ENCODE measurements at regions of chr11 and their contacts with region 1.

Region 1: GRCh38 chr11:96342961-96343711 is at the start of gene MAML2:
- DNase-seq: peak; percentile 82 to 94 (median 85)
- H3K4me3 ChIP-seq: peak within 1 kb of the TSS; percentile 99
- H3K4me3 Mint-ChIP-seq: peak within 1 kb of the TSS; percentile 90 to 99 (median 96)
- H3K27ac ChIP-seq: peak within 1 kb of the TSS; percentile 46
- H3K27ac Mint-ChIP-seq: peak within 1 kb of the TSS; percentile 87 to 94 (median 92)
- H3K4me1 ChIP-seq: peaks cover 37% of the 10 kb centered on the region
- H3K4me1 Mint-ChIP-seq: peaks cover 40 to 44% (median 40%) of the 10 kb centered on the region in 3 donors
- H3K27me3 ChIP-seq: no peaks in the 10 kb centered on the region
- H3K27me3 Mint-ChIP-seq: no peaks in the 10 kb centered on the region
- total RNA-seq, gene MAML2: 15.6 to 15.9 TPM

Region 2: DNA sequence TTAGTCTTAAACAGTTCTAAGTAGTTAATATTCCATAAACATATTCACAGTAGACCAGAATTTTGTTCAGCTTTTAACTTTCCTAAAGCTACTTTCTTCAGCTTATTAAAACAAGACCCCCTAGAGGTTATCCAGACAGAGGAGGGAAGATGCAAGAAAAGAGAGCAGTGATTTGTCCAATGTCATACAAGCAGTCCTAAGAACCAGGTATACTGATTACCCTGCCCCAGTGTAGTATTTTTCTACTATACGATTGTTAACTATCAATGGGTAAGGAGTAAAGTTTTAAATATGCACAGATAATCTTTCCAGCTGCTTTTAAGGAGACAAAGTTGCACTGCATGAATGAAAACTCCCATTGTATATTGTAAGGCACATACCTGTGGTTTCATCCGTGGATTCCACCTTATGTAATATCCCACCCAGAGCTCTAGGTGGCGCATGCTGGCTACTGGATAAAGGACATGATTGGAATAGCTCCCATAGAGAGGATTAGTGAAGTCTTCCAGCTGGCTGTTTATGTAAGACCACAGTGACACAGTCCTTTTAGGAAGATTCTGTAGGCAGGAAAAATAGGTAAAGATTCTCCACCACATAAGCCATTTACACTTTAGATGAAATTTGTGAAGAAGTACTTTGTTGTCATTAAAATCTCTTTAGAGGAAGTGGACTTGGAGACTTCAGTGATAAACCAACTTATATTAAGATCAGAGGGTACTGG is 507.2 kb before region 1 on chr11:
- CTCF ChIA-PET with region 1: interaction called, 19 read pairs
- POLR2A ChIA-PET with region 1: no interaction called
- DNase-seq: peak; percentile 10 to 69 (median 42)
- H3K4me3 ChIP-seq: no peak overlapping the region
- H3K4me3 Mint-ChIP-seq: no peak overlapping the region
- H3K27ac ChIP-seq: no peak overlapping the region
- H3K27ac Mint-ChIP-seq: peak overlapping the region in 6 of 8 donors; percentile 14 to 73 (median 50)
- H3K4me1 ChIP-seq: no peaks in the 10 kb centered on the region
- H3K4me1 Mint-ChIP-seq: no peaks in the 10 kb centered on the region
- H3K27me3 ChIP-seq: no peaks in the 10 kb centered on the region
- H3K27me3 Mint-ChIP-seq: no peaks in the 10 kb centered on the region

Region 3: GRCh38 chr11:96001037-96001436 is 342.1 kb before region 1 on chr11:
- CTCF ChIA-PET with region 1: no interaction called
- POLR2A ChIA-PET with region 1: no interaction called
- DNase-seq: no peak
- H3K4me3 ChIP-seq: no peak overlapping the region
- H3K4me3 Mint-ChIP-seq: no peak overlapping the region
- H3K27ac ChIP-seq: no peak overlapping the region
- H3K27ac Mint-ChIP-seq: peak overlapping the region in 1 of 8 donors; percentile 5
- H3K4me1 ChIP-seq: no peaks in the 10 kb centered on the region
- H3K4me1 Mint-ChIP-seq: peaks cover 13 to 29% (median 20%) of the 10 kb centered on the region in 3 donors
- H3K27me3 ChIP-seq: no peaks in the 10 kb centered on the region
- H3K27me3 Mint-ChIP-seq: no peaks in the 10 kb centered on the region

Region 4: GRCh38 chr11:96054870-96055705 is 288.0 kb before region 1 on chr11:
- CTCF ChIA-PET with region 1: interaction called, 85 read pairs
- POLR2A ChIA-PET with region 1: interaction called, 10 read pairs
- DNase-seq: peak in 2 of 5 donors; percentile 15 to 18
- H3K4me3 ChIP-seq: no peak overlapping the region
- H3K4me3 Mint-ChIP-seq: no peak overlapping the region
- H3K27ac ChIP-seq: no peak overlapping the region
- H3K27ac Mint-ChIP-seq: peak overlapping the region in 3 of 8 donors; percentile 4 to 12 (median 10)
- H3K4me1 ChIP-seq: peaks cover 4% of the 10 kb centered on the region
- H3K4me1 Mint-ChIP-seq: peaks cover 13 to 43% (median 27%) of the 10 kb centered on the region in 3 donors
- H3K27me3 ChIP-seq: no peaks in the 10 kb centered on the region
- H3K27me3 Mint-ChIP-seq: no peaks in the 10 kb centered on the region

Region 5: GRCh38 chr11:96091476-96091875 is 251.7 kb before region 1 on chr11:
- CTCF ChIA-PET with region 1: interaction called, 96 read pairs
- POLR2A ChIA-PET with region 1: interaction called, 4 read pairs
- DNase-seq: peak in 3 of 5 donors; percentile 27 to 50 (median 33)
- H3K4me3 ChIP-seq: no peak overlapping the region
- H3K4me3 Mint-ChIP-seq: peak overlapping the region in 2 of 7 donors; percentile 53 to 69
- H3K27ac ChIP-seq: no peak overlapping the region
- H3K27ac Mint-ChIP-seq: peak overlapping the region in 3 of 8 donors; percentile 52 to 93 (median 72)
- H3K4me1 ChIP-seq: peaks cover 11% of the 10 kb centered on the region
- H3K4me1 Mint-ChIP-seq: peaks cover 28 to 79% (median 68%) of the 10 kb centered on the region in 3 donors
- H3K27me3 ChIP-seq: no peaks in the 10 kb centered on the region
- H3K27me3 Mint-ChIP-seq: no peaks in the 10 kb centered on the region

Region 6: GRCh38 chr11:96162816-96163499 is 180.2 kb before region 1 on chr11:
- CTCF ChIA-PET with region 1: interaction called, 19 read pairs
- POLR2A ChIA-PET with region 1: no interaction called
- DNase-seq: no peak
- H3K4me3 ChIP-seq: no peak overlapping the region
- H3K4me3 Mint-ChIP-seq: peak overlapping the region in 1 of 7 donors; percentile 59
- H3K27ac ChIP-seq: no peak overlapping the region
- H3K27ac Mint-ChIP-seq: peak overlapping the region in 1 of 8 donors; percentile 64
- H3K4me1 ChIP-seq: peaks cover 4% of the 10 kb centered on the region
- H3K4me1 Mint-ChIP-seq: peaks cover 34 to 67% (median 49%) of the 10 kb centered on the region in 3 donors
- H3K27me3 ChIP-seq: no peaks in the 10 kb centered on the region
- H3K27me3 Mint-ChIP-seq: no peaks in the 10 kb centered on the region

Region 7: DNA sequence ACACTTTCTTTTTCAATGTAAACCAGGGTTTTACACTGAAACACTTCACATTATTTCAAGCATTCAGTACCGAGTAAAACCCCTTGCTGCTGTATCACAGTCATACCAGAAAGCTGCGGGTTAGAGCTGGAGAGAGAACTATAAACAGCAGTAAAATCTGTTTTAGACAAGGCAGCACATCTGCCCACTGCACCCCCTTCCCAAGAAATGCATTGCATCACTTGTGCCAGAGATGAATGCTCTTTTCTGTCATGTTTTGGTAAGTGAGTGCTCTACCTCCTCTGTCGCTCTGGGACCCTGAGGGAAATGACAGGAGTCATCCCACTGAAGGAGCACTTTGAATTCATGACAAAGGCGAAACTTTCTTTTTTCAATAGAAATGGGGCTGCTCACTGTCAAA is 107.4 kb before region 1 on chr11:
- CTCF ChIA-PET with region 1: interaction called, 10 read pairs
- POLR2A ChIA-PET with region 1: no interaction called
- DNase-seq: no peak
- H3K4me3 ChIP-seq: no peak overlapping the region
- H3K4me3 Mint-ChIP-seq: peak overlapping the region in 1 of 7 donors; percentile 8
- H3K27ac ChIP-seq: no peak overlapping the region
- H3K27ac Mint-ChIP-seq: peak overlapping the region in 2 of 8 donors; percentile 15 to 80
- H3K4me1 ChIP-seq: peaks cover 42% of the 10 kb centered on the region
- H3K4me1 Mint-ChIP-seq: peaks cover 23 to 41% (median 24%) of the 10 kb centered on the region in 3 donors
- H3K27me3 ChIP-seq: no peaks in the 10 kb centered on the region
- H3K27me3 Mint-ChIP-seq: no peaks in the 10 kb centered on the region

Region 8: DNA sequence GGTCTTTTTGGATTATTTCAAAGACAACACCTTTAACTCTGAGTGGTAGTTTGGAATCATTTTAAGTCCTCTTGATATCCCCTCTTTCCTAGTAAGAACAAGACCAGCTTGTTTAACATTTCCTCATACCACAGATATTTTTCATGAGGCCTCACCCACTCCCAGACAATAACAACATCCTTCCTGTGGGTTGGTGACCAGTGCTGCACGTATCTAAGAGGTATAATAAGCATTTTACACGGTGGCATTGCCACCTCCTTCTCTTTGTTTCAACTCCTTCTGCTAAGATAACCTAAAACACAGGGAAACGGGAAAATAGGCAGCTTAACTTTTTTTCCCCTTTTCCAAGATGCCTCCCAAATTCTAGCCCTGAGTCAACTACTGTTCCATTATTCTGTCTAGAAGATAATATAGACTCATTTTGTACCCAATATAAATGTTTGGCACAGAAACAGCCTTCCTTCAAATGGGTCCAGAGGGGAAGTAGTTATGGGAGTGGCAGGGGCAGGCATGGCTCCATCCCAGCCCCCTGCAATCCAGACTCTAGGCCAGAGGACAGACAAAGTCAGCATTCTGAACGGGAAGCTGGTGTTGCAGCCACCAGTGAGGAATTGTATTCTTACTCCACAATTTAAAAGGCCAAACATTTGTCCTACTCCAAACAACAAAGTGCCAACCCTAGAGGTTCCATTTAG is 28.7 kb before region 1 on chr11:
- CTCF ChIA-PET with region 1: interaction called, 20 read pairs
- POLR2A ChIA-PET with region 1: interaction called, 3 read pairs
- DNase-seq: no peak
- H3K4me3 ChIP-seq: no peak overlapping the region
- H3K4me3 Mint-ChIP-seq: peak overlapping the region in 6 of 7 donors; percentile 7 to 77 (median 55)
- H3K27ac ChIP-seq: no peak overlapping the region
- H3K27ac Mint-ChIP-seq: peak overlapping the region in 7 of 8 donors; percentile 47 to 92 (median 80)
- H3K4me1 ChIP-seq: peaks cover 55% of the 10 kb centered on the region
- H3K4me1 Mint-ChIP-seq: peaks cover 66 to 86% (median 84%) of the 10 kb centered on the region in 3 donors
- H3K27me3 ChIP-seq: no peaks in the 10 kb centered on the region
- H3K27me3 Mint-ChIP-seq: no peaks in the 10 kb centered on the region

Measured in CD8-positive, alpha-beta memory T cell (primary cell).